Activated CD4-positive, alpha-beta T cell treated with anti-CD3 and anti-CD28 coated beads, Interleukin-2, amount 10 ng/mL, durations not matched to agents 24 days and 14 days (primary cell): ENCODE measurements at regions of chr16 and their contacts with region 1.

Region 1: GRCh38 chr16:4660454-4661007 is 32.8 kb upstream of the NUDT16L1 start:
- DNase-seq: peak; percentile 92
- H3K4me3 Mint-ChIP-seq: peak overlapping the region; percentile 61
- H3K27ac Mint-ChIP-seq: peak overlapping the region; percentile 92
- H3K4me1 Mint-ChIP-seq: peaks cover 42% of the 10 kb centered on the region
- H3K27me3 Mint-ChIP-seq: no peaks in the 10 kb centered on the region

Region 2: DNA sequence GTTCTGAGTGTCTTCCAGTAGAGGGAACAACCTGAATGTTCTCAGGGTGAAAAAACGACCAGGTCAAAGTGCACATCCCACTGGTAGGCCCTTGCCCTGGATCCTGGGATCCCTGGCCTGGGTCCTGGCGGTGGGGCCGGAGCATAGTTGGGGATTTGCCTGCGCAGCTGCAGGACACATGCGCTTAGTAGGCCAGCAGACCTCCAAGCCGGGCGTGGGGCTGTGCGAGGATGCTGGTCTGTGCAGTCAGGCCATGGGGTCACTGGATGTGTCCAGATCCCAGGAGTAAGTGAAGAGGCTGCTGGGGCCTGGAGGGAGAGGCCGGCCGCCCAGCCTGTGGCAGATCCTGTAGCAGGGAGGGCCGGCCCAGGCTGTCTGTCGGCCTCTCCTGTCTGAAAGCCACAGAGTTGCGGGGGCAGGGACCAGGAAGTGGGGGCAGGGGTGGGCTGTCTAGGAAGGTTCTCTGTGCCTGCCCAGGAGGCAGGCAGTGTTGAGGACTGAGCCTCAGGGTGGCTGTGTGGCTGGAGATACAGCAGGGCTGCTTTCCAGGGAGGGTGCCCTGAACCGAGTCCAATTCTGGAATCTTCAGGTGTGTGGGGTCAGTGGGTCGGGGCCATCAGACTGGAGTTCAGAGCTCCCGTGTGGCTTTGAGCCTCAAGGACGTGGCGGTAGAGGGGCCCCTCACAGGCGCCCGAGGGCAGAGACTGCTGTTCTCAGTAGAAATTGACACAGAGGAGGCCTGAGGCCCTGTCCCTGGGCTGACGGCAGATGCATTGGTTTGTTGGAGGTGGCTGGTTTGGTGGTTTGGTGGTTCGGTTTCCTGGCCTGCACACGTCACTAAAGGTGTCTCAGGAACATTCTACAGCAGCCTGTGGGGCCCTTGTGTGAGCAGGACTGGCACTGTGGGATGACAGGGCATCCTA is 15.6 kb after region 1 on chr16:
- intact Hi-C with region 1: loop called (anchors 1 kb)
- DNase-seq: peak; percentile 93
- H3K4me3 Mint-ChIP-seq: peak overlapping the region; percentile 85
- H3K27ac Mint-ChIP-seq: peak overlapping the region; percentile 99
- H3K4me1 Mint-ChIP-seq: peaks cover 26% of the 10 kb centered on the region
- H3K27me3 Mint-ChIP-seq: no peaks in the 10 kb centered on the region